Activated T-helper 2 cell treated with anti-CD3 and anti-CD28 coated beads, Interferon-gamma antibody, Interleukin-2, Interleukin-4, amounts not matched to agents 10 μg/mL and 5 μg/mL and 100 μg/mL, durations not matched to agents 14 hours and 24 hours and 36 hours (primary cell): ENCODE measurements at regions of chr1 and their contacts with region 1.

Region 1: DNA sequence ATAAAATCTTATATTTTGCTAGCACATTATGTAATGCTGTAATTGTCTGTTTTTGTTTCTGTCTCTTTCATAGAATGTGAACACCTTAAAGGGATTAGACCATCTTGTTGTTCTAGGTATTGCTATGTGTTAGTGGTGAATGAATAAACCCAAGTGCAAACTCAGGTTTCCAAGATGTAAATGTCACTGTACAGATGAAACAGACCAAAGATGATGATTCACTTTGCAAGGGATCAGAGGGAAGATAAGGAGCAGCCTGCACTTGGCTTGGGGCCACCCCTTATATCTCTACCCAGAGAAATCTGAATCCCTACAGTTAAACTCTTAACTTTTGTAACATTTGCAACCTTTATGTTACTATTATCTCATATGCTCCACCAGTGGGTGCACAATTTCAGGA is 25.4 kb downstream of the UROD start:
- DNase-seq: no peak
- H3K4me3 Mint-ChIP-seq: no peak overlapping the region
- H3K27ac Mint-ChIP-seq: no peak overlapping the region
- H3K4me1 Mint-ChIP-seq: peaks cover 14% of the 10 kb centered on the region
- H3K27me3 Mint-ChIP-seq: peaks cover 28% of the 10 kb centered on the region

Region 2: DNA sequence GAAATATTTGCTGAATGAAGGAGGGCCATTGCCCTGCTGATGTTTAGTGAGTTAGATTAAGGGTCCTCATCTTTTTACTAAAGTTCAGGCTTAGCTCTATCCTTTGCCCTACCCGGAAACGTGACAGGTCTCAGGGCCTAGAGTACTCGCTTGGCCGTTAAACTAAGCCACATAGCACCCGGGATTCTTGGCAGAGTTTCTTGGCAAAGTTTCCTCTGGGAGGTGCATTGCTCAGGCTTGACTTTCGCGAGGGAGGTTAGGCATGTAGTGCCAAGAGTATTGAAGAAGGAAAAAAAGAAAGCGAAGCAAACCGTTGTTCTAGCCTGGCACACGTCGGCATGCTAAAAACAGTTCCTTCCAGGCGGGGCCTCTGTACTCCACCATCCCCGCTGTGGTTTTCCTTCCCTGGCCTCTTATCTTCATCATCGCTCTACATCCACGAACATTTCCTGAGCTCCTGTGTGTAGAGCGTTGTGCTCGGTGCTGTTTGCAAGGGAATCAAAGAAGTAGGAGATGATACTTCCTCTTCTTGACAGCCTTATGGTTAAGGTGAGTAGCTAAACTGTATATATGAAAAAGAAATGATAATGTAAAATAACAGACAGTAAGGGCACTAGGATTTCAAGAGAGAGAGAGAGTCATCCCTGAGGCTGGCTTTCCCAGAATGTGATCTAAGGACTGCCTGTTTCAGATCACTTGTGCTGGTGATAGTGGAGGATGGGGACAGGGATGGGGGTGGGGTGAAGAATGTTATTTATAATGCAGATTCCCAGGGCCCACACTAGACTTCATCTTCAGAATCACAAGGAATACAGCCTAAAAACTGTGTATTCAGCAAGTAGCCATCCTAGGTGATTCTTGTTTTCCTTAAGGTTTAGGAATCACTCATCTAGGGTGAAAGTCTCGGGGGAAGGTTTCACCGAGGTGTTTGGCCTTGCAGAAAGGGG is 613.6 kb before region 1 on chr1:
- intact Hi-C with region 1: no loop called
- DNase-seq: no peak
- H3K4me3 Mint-ChIP-seq: no peak overlapping the region
- H3K27ac Mint-ChIP-seq: no peak overlapping the region
- H3K4me1 Mint-ChIP-seq: peaks cover 2% of the 10 kb centered on the region
- H3K27me3 Mint-ChIP-seq: peaks cover 89% of the 10 kb centered on the region

Region 3: GRCh38 chr1:45026446-45026845 is 11.0 kb before region 1 on chr1:
- intact Hi-C with region 1: loop called (anchors 1 kb)
- DNase-seq: no peak
- H3K4me3 Mint-ChIP-seq: no peak overlapping the region
- H3K27ac Mint-ChIP-seq: no peak overlapping the region
- H3K4me1 Mint-ChIP-seq: peaks cover 11% of the 10 kb centered on the region
- H3K27me3 Mint-ChIP-seq: peaks cover 28% of the 10 kb centered on the region

Region 4: GRCh38 chr1:45200906-45201500 is 163.5 kb after region 1 on chr1:
- intact Hi-C with region 1: loop called (anchors 5 kb)
- DNase-seq: no peak
- H3K4me3 Mint-ChIP-seq: no peak overlapping the region
- H3K27ac Mint-ChIP-seq: no peak overlapping the region
- H3K4me1 Mint-ChIP-seq: peaks cover 8% of the 10 kb centered on the region
- H3K27me3 Mint-ChIP-seq: peaks cover 46% of the 10 kb centered on the region

Region 5: GRCh38 chr1:45769261-45769932 is 731.9 kb after region 1 on chr1:
- intact Hi-C with region 1: no loop called
- DNase-seq: no peak
- H3K4me3 Mint-ChIP-seq: no peak overlapping the region
- H3K27ac Mint-ChIP-seq: no peak overlapping the region
- H3K4me1 Mint-ChIP-seq: peaks cover 2% of the 10 kb centered on the region
- H3K27me3 Mint-ChIP-seq: no peaks in the 10 kb centered on the region